ENCODE measurements at regions of chr6 and their contacts with region 1.

Region 1: DNA sequence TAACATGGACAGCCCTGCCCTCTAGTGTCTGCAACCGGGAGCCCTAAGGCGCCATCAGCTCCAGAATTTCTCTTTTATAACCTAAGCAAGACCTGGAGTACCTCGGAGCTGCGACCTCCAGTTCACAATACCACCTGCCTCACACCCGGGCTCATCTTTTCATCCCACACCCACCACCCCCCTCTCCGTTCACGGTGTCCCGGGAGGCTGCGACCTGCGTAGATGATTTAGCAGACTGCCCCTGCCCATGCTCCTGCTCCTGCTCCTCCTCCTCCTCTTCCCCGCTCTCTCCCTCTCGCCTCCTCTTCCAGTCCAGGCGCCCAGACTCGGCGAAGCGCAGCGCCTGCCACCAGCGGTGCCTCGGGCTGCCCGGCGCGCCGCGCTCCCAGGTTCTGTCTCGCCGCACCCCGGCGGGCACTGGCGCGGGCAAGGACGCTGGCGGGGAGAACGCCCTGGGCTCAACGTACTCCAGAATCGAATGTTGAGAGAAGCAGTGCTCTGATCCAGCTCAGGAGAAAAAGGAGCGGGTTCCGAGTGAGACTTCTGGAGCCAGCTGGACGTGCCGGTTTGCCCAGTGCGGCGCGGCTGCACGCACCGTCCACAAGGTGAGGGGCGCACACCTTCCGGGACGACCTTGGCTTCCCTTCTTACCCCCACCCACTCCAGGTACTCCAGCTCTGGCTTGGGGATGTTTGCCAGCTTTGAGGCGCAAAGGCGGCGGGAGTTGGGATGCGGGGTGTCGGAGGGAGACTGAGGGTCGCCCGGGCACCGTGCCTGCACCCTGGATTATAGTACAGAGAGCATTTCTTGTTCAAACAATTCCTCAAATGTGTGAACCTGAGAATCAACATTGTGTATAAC is at the start of gene HTR1E:
- DNase-seq: peak; percentile 28 to 78 (median 66)
- H3K4me3 ChIP-seq: peak within 1 kb of the TSS; percentile 21 to 72 (median 57)
- H3K27ac ChIP-seq: peak within 1 kb of the TSS in 56 of 59 donors; percentile 12 to 86 (median 72)
- H3K27me3 ChIP-seq: peaks cover 0 to 41% (median 2%) of the 10 kb centered on the region in 45 donors
- CTCF ChIP-seq: peak in 54 of 56 donors; percentile 29 to 66 (median 52)
- total RNA-seq, gene HTR1E: 4.3 to 22.0 (median 12.8) TPM

Region 2: GRCh38 chr6:85756982-85757381 is 1180.5 kb before region 1 on chr6:
- intact Hi-C with region 1: loop called in 1 of 2 experiments (anchors 10 kb)
- DNase-seq: no peak
- H3K4me3 ChIP-seq: no peak overlapping the region
- H3K27ac ChIP-seq: no peak overlapping the region
- H3K27me3 ChIP-seq: no peaks in the 10 kb centered on the region
- CTCF ChIP-seq: peak in 54 of 56 donors; percentile 16 to 64 (median 46)

Region 3: GRCh38 chr6:85923013-85923430 is 1014.4 kb before region 1 on chr6:
- intact Hi-C with region 1: loop called in 1 of 2 experiments (anchors 10 kb)
- DNase-seq: peak in 3 of 10 donors; percentile 46 to 59 (median 49)
- H3K4me3 ChIP-seq: no peak overlapping the region
- H3K27ac ChIP-seq: peak overlapping the region in 6 of 59 donors; percentile 16 to 58 (median 38)
- H3K27me3 ChIP-seq: no peaks in the 10 kb centered on the region
- CTCF ChIP-seq: peak; percentile 36 to 79 (median 66)

Region 4: GRCh38 chr6:86615299-86615698 is 322.1 kb before region 1 on chr6:
- intact Hi-C with region 1: no loop called
- DNase-seq: no peak
- H3K4me3 ChIP-seq: no peak overlapping the region
- H3K27ac ChIP-seq: no peak overlapping the region
- H3K27me3 ChIP-seq: no peaks in the 10 kb centered on the region
- CTCF ChIP-seq: no peak

Region 5: DNA sequence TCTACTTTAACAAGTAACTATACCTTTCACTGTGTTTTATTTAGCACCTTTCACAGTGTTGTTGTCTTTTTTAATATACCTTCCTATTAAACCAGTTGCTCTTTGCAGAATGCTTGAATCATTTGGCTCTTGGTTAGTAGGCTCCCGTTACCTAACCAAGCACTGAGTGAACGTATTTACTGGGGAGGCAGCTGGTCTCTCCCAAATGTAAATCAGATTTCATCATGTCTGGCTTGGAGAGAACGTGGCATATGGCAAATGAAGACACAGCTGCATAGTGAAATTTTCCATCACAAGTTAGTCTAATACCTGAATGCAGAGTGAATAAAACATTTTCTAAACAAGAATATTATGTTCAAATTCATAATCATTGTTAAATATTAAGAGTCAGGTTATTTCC is 12.3 kb after region 1 on chr6:
- intact Hi-C with region 1: no loop called
- DNase-seq: no peak
- H3K4me3 ChIP-seq: peak overlapping the region in 1 of 59 donors; percentile 18
- H3K27ac ChIP-seq: peak overlapping the region in 22 of 59 donors; percentile 6 to 64 (median 30)
- H3K27me3 ChIP-seq: no peaks in the 10 kb centered on the region
- CTCF ChIP-seq: no peak

Measured in dorsolateral prefrontal cortex (tissue), 120 donors.